ENCODE measurements at regions of chr13 and their contacts with region 1.

Region 1: DNA sequence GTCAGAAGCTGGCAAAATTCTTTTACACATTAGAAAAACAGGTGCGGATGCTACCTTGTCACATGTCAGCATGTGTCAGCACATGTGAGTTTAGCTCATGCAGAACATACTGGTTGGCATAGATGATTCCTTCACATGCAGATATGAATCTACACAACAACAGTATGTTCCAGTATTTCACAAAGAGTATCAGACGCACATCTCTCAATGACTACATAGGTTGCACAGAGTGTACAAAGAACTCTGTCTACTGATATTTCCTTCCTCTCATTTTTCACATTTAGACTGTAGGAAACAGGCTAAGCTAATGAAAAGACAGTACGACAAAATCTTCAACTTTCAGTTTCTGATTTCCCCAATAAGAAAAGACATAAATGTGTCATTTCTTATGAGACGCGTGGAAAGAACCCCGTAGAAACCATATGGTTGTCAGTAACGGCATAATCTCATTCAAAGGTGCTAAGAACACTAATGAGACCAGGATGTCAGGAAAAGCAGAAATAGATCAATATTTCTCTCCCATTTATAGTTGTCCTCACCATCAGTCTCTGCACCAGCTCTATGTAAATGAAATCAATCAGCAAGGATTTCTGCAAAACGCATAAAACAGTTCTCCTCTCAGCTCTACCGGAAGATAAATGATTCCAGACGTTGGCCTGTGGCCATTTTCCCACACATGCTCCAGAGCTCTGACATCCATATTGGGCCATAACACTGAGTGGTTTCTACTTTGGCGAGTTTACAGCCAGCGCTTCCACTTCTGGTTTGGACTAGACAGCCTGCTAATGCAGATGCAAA is 81.2 kb downstream of the STARD13 start:
- DNase-seq: peak; percentile 84 to 86
- ATAC-seq: peak; percentile 73
- H3K4me3 ChIP-seq: peak overlapping the region; percentile 97 to 100
- H3K27ac ChIP-seq: peak overlapping the region; percentile 83 to 86
- H3K4me1 ChIP-seq: peaks cover 10 to 11% of the 10 kb centered on the region in 2 donors
- H3K27me3 ChIP-seq: no peaks in the 10 kb centered on the region

Region 2: DNA sequence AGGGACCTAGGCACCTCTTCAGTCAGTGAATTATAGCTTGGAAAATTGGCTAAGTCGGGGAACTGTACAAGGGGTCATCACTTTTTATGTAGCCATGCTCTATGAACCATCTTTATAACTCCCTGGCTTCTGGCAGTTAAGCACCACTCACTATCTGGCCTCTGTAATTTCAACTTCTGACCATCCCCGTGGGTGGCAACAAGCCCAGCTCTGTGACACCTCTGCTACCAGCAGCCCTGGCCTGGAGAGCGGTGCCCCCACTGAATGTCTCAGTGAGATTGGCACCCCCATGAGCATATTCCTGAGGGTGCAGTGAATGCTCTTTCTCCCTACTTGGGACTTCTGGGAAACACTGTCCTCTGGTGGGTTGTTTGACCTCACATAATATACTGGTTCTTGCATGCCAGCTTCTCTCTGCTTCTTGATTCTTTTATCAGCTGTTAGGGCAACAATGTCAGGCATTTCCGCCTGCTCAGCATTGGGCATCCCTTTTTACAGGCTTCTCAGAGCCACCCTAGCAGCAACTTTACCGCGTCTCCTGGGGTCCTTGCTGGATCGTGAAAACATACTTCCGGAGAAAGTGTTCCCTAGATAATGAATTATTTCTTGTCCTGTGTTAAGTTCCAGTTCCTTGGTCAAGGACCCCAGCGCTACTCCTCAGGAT is 177.7 kb before region 1 on chr13:
- intact Hi-C with region 1: no loop called
- DNase-seq: no peak
- ATAC-seq: no peak
- H3K4me3 ChIP-seq: no peak overlapping the region
- H3K27ac ChIP-seq: no peak overlapping the region
- H3K4me1 ChIP-seq: no peaks in the 10 kb centered on the region
- H3K27me3 ChIP-seq: no peaks in the 10 kb centered on the region

Region 3: DNA sequence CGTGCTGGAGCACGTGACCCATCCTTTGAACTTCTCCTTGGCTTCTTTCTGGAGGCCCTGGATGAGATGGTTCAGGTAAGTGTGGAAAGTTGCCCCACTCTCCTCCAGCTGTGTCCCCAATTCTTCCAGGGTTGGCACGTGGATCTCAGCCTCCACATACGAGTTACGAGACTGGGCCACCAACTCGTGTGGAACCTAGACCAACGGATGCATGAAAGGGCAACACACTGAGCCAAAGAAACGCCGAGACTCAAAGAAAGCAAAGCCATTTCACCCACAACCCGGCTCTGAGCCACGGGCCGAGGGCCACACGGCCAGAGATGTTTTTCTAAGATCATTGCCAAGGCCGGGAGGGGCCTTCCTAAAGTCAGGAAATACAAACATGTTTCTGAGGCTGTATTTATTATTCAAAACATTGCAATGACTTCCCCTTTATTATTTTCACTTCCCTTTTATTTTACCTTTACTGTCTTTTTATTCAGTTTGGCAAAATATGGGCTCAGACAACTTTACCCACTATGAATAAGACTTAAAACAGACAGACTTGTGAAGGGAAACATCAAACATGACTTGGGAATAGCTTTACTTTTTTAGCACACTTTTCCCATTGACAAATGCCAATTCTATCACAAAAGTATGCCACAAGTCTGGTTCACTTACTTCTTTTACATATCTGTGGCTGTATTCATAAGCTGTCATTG is 93.5 kb before region 1 on chr13:
- intact Hi-C with region 1: loop called (anchors 5 to 10 kb)
- DNase-seq: peak in 1 of 2 donors; percentile 84
- ATAC-seq: peak; percentile 73
- H3K4me3 ChIP-seq: no peak overlapping the region
- H3K27ac ChIP-seq: peak overlapping the region; percentile 59 to 72
- H3K4me1 ChIP-seq: peaks cover 6 to 11% of the 10 kb centered on the region in 2 donors
- H3K27me3 ChIP-seq: no peaks in the 10 kb centered on the region

Region 4: DNA sequence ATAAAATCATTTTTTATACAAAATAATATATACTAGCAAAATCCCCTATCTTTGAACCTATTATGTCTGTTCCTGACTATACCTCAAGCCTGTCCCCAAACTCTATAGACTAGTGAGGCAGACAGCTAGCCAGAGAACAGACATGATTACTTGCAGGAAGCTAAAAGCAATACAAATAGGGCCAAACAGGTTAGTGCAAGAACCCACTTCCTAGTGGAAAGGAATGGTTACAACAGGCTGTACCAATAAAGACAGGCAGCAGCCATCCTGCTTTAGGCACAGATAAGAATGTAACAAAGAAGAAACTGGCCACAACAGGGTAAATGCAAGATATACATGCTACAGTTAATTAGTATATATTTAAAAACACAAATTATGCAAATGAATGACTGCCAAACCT is 48.7 kb before region 1 on chr13:
- intact Hi-C with region 1: loop called in 1 of 2 experiments (anchors 5 kb)
- DNase-seq: no peak
- ATAC-seq: no peak
- H3K4me3 ChIP-seq: no peak overlapping the region
- H3K27ac ChIP-seq: no peak overlapping the region
- H3K4me1 ChIP-seq: peaks cover 0 to 10% of the 10 kb centered on the region in 2 donors
- H3K27me3 ChIP-seq: no peaks in the 10 kb centered on the region

Region 5: DNA sequence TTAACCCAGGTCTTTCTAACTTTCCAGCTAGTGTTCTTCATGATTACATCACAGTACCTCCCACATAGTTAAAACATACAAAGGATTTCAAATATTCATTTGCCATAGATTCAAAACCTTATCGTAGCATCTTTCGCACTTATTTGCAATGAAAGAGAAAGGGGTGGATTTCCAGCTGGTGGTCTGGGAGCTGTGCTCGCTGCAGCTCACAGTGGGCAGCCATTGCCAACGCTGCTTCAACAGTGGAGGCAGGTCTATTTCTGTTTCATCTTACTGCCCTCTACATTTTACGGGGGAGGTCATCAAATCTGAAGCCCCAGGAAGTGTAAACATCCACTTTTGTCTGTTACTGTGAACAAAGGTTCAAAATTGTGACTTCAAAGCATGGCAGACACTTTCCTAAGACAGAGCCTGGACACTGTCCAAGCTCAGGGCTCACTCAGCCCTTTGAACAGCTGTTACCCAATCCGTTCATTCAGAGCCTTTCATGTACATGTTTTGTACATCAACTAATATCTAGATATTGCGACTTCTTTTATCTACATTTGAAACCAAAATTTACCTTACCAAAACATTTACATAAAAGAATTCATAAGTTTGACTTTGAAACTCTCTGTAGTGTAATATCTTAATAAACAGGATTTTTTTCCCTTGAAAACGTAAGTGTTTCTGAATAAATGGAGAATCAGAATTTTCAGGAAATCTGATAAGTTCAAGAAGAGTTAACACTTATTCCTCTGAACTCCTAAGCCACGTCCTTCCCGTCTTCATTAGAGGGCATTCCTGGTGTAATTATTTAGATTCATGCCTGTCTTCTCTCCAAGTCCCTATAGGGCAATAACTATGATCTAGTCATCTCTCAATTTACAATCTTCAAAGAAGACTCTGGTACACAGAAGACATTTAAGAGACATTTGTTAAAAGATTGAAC is 56.1 kb after region 1 on chr13:
- intact Hi-C with region 1: no loop called
- DNase-seq: no peak
- ATAC-seq: no peak
- H3K4me3 ChIP-seq: no peak overlapping the region
- H3K27ac ChIP-seq: no peak overlapping the region
- H3K4me1 ChIP-seq: peaks cover 0 to 7% of the 10 kb centered on the region in 2 donors
- H3K27me3 ChIP-seq: no peaks in the 10 kb centered on the region

Region 6: DNA sequence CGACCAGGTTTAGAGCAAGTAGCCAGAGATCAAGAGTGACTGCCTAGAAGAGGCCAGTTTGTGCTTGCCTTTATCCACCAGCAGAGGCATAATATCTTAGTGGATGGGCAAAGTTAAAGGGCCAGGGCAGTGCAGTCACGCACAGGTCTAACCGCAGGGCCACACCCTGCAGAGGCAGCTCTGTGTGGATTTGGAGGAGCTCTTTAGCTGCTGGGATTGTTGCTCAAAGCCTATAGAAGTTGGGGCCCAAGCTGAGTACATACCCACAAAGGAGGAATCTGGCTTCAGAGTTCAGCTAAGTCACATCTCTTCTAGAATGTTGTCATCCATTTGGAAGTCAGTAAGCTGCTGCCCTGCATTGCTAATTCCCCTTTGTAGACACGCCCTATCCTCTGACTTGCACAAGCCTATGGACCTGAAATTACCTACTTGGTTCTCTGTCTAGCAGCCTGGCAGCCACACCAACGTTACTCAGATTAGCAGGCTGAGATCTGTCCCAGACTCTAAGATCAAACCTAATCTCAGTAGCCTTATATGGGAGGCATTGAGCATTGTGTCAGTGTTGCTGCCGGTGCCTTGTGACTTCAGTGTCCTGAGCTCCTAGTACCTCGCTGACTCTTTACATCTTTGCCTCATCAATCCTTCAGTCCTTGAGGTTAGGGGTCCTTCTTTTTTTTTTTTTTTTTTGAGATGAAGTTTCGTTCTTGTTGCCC is 184.1 kb after region 1 on chr13:
- intact Hi-C with region 1: no loop called
- DNase-seq: no peak
- ATAC-seq: peak; percentile 11
- H3K4me3 ChIP-seq: no peak overlapping the region
- H3K27ac ChIP-seq: no peak overlapping the region
- H3K4me1 ChIP-seq: no peaks in the 10 kb centered on the region
- H3K27me3 ChIP-seq: no peaks in the 10 kb centered on the region

Measured in aorta (tissue), 5 donors.